GM12878 (cell line): ENCODE measurements at regions of chr6 and their contacts with region 1.

Region 1: GRCh38 chr6:6811151-6812002 is 222.9 kb downstream of the LY86 start:
- DNase-seq: no peak
- ATAC-seq: peak; percentile 76
- H3K4me3 ChIP-seq: peak overlapping the region; percentile 52; the same call in 1 of the 2 replicates
- H3K27ac ChIP-seq: 0 out of 2 replicates have a peak overlapping the region, but pooled peaks have one; percentile 15
- H3K4me1 ChIP-seq: peaks cover 25% of the 10 kb centered on the region
- H3K27me3 ChIP-seq: no peaks in the 10 kb centered on the region
- CTCF ChIP-seq: no peak
- EP300 ChIP-seq: no peak
- POLR2A ChIP-seq: no peak
- RAD21 ChIP-seq: no peak

Region 2: DNA sequence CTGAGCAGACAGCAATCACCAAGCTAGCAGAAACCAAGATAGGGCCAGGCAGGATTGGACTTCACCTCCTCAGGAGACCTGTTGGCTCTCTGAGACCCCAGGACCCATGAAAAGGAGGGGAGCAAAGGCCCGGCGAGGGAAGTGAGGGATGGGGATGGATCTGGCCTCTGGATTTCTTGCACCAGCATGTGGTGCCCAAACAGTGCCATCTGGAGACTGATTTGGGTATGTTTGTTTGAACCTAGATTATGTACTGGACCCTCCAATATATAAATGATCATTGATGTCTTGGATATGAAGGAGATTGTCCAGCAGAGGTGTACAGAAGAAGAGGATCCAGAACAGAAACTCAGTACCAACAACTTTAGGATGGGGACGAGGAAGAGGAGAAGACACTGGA is 306.3 kb before region 1 on chr6:
- CTCF ChIA-PET with region 1: no interaction called
- POLR2A ChIA-PET with region 1: no interaction called
- RAD21 ChIA-PET with region 1: no interaction called
- SMC1A ChIA-PET with region 1: no interaction called
- in situ Hi-C with region 1: no loop called
- intact Hi-C with region 1: no loop called
- DNase-seq: no peak
- ATAC-seq: no peak; the same call in 2 of the 3 replicates
- H3K4me3 ChIP-seq: no peak overlapping the region
- H3K27ac ChIP-seq: no peak overlapping the region
- H3K4me1 ChIP-seq: no peaks in the 10 kb centered on the region; the same call in 1 of the 2 replicates
- H3K27me3 ChIP-seq: no peaks in the 10 kb centered on the region
- CTCF ChIP-seq: no peak
- EP300 ChIP-seq: no peak
- POLR2A ChIP-seq: no peak
- RAD21 ChIP-seq: 0 out of 2 replicates have a peak, but pooled peaks have one; percentile 16

Region 3: GRCh38 chr6:6766230-6766905 is 45.0 kb before region 1 on chr6:
- CTCF ChIA-PET with region 1: no interaction called
- POLR2A ChIA-PET with region 1: no interaction called
- RAD21 ChIA-PET with region 1: no interaction called
- SMC1A ChIA-PET with region 1: no interaction called
- in situ Hi-C with region 1: no loop called
- intact Hi-C with region 1: no loop called
- DNase-seq: no peak
- ATAC-seq: peak; percentile 42; the same call in 1 of the 3 replicates
- H3K4me3 ChIP-seq: no peak overlapping the region
- H3K27ac ChIP-seq: no peak overlapping the region
- H3K4me1 ChIP-seq: no peaks in the 10 kb centered on the region
- H3K27me3 ChIP-seq: no peaks in the 10 kb centered on the region
- CTCF ChIP-seq: no peak
- EP300 ChIP-seq: no peak
- POLR2A ChIP-seq: no peak
- RAD21 ChIP-seq: no peak

Region 4: DNA sequence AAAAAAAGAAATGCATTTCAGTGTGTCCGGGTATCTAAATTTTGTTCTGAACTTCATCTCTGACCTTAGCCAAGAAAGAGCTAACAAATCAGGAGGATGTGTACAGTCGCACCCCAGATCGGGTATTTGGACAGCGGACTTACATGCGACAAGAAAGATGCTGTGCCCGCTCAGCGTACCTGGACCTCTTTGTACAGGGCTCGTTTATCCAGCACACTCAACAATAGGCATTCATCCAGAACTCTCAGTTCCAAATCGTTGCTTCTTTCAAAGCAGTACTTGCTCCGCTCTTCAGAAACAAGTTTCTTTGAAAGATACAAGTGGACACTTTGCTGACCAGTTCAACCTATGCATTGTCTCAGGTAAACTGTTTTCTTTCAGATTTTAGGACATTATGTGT is 31.1 kb before region 1 on chr6:
- CTCF ChIA-PET with region 1: no interaction called
- POLR2A ChIA-PET with region 1: no interaction called
- RAD21 ChIA-PET with region 1: no interaction called
- SMC1A ChIA-PET with region 1: no interaction called
- in situ Hi-C with region 1: no loop called
- intact Hi-C with region 1: no loop called
- DNase-seq: no peak
- ATAC-seq: no peak
- H3K4me3 ChIP-seq: no peak overlapping the region
- H3K27ac ChIP-seq: no peak overlapping the region
- H3K4me1 ChIP-seq: no peaks in the 10 kb centered on the region
- H3K27me3 ChIP-seq: peaks cover 0 to 5% of the 10 kb centered on the region in 2 experiments; a peak in 1 of 4 replicates
- CTCF ChIP-seq: no peak
- EP300 ChIP-seq: no peak
- POLR2A ChIP-seq: no peak
- RAD21 ChIP-seq: no peak

Region 5: GRCh38 chr6:6793388-6794250 is 17.8 kb before region 1 on chr6:
- CTCF ChIA-PET with region 1: interaction called, 3 read pairs
- POLR2A ChIA-PET with region 1: interaction called, 9 read pairs
- RAD21 ChIA-PET with region 1: interaction called, 13 read pairs
- SMC1A ChIA-PET with region 1: interaction called, 31 read pairs
- in situ Hi-C with region 1: no loop called
- intact Hi-C with region 1: loop called (anchors 2 kb)
- DNase-seq: no peak
- ATAC-seq: no peak
- H3K4me3 ChIP-seq: no peak overlapping the region
- H3K27ac ChIP-seq: no peak overlapping the region
- H3K4me1 ChIP-seq: peaks cover 28% of the 10 kb centered on the region
- H3K27me3 ChIP-seq: no peaks in the 10 kb centered on the region
- CTCF ChIP-seq: no peak
- EP300 ChIP-seq: no peak
- POLR2A ChIP-seq: no peak
- RAD21 ChIP-seq: no peak

Region 6: GRCh38 chr6:6826095-6826901 is 14.9 kb after region 1 on chr6:
- CTCF ChIA-PET with region 1: interaction called, 4 read pairs
- POLR2A ChIA-PET with region 1: interaction called, 5 read pairs
- RAD21 ChIA-PET with region 1: interaction called, 8 read pairs
- SMC1A ChIA-PET with region 1: interaction called, 13 read pairs
- in situ Hi-C with region 1: no loop called
- intact Hi-C with region 1: no loop called
- DNase-seq: peak; percentile 69
- ATAC-seq: peak; percentile 95
- H3K4me3 ChIP-seq: no peak overlapping the region
- H3K27ac ChIP-seq: no peak overlapping the region
- H3K4me1 ChIP-seq: peaks cover 23% of the 10 kb centered on the region
- H3K27me3 ChIP-seq: no peaks in the 10 kb centered on the region
- CTCF ChIP-seq: no peak
- EP300 ChIP-seq: peak in 1 of 2 experiments; percentile 13; a peak in 1 of 4 replicates
- POLR2A ChIP-seq: no peak
- RAD21 ChIP-seq: no peak